Cardiac septum (tissue), 1 donor: ENCODE measurements at regions of chr13 and their contacts with region 1.

Region 1: DNA sequence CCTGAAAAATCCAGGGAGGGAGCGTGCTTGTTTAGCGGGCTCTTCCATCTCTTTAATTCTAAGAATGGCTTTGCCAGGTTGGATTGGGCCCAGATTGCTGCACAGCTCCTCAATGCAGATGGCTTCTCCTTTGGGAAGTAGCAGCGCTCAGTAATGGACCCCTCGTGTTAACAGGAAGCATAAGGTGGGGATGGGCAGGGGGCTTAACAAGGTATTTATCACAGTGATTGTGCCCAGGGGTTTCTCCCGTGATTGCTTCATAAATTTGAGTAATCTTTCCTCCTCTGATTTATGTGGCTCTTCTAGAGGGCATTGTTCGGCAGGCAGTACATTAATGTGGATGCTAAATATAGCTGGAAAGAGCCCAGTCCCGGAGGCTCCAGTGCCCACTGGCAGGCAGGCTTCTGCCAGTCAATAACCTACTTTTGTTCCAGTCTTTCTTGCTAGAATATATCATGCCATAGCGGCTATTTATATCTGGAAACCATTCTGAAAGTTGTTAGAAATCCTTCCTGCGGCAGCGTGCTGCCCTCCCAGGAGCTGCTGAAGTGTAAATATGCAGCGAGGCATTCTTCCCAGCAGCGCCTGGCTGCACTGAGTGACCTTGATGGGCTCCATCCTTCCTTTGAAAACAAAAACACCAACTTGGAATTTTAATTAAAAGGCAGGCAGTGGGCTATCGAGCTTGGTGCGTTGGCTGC is 65.0 kb downstream of the FGF9 start:
- DNase-seq: no peak

Region 2: DNA sequence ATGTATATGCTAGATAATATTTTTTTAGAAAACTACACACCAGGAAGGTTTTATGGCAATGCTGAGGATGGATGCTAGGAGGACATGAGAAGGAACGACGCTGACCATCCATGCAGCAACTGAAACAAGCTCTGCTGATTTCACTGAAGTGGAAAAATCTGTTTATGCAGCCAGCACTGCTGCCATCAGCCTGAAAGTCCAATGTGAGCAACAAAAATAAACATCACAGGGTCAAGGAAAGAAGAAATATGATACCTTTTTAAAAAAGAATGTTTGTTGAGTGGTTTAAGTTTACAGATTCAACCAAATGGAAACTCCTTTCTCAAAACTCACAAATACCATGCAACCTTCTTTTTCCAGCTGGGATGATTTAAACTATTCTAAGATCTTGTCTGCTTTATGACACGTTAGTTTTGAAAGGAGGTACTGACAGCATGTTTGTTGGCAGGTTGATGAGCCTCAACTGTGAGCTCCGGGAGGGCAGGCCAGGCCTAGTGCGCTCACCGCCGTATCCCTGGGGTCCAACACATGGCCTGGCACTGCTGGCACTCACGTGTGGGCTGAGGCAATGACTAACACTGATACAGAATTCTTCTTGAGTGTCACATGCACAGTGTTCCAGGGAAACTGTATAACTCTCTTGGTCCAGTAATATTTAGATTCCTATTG is 721.2 kb before region 1 on chr13:
- intact Hi-C with region 1: no loop called
- DNase-seq: peak; percentile 79

Region 3: DNA sequence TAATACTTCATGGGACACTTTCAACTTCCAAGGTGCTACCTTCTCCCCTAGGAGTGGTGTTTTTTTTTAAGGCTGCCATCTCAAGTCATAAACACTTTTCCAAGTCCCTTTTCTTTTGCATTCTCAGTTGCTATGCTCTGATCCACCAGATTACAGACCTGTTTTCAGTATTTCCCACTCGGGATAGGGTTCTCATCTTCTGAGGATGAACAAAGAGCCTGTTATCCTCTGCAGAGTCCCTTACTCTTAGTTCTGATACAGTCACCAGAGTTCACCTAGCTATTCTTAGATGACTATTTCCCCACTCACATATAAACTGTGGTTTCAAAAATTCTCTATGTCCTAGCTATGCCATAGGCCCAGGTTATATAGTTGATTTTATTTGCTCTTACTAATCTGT is 292.7 kb before region 1 on chr13:
- intact Hi-C with region 1: no loop called
- DNase-seq: no peak

Region 4: DNA sequence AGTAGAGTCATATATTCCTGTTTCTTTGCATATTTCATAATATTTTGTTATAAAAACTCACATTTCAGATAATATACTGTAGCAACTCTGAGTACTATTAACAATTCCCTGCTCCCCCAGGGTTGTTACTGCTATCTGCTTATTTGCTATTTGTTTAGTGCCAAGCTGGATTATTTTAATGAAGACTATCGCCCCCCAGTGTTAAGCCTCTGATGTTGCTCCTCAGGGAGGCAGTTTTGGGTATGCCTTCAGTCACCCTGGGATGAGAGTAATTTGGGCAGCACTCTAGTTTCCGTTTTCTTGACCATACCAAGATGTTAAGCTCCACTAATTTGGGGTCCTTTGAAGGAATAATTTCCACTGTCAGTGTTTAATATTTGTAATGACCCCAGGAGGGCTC is 177.9 kb before region 1 on chr13:
- intact Hi-C with region 1: no loop called
- DNase-seq: no peak

Region 5: DNA sequence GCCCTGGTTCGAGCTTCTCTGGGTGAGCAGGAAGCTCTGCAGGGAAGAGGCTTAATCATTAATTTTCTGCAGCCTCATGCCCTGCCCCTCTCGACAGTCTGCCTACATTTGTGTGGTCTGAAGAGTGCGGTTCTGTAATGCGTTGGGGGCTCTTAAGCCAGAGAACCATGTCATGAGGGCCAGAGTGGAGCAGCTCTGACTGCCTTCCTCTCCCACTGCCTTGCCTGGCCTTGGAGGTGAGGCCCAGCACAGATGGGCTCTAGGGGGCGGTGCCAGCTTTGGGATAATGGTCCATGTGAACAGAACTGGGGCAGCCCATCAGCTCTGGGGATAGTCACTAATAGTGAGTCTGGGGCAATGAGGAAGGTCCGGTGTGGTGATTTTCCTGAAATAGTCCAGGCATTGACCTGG is 59.2 kb before region 1 on chr13:
- intact Hi-C with region 1: loop called (anchors 2 kb)
- DNase-seq: no peak

Region 6: GRCh38 chr13:22187329-22187728 is 451.5 kb after region 1 on chr13:
- intact Hi-C with region 1: no loop called
- DNase-seq: no peak